Cardiac septum (tissue), 1 donor: ENCODE measurements at regions of chr9 and their contacts with region 1.

Region 1: DNA sequence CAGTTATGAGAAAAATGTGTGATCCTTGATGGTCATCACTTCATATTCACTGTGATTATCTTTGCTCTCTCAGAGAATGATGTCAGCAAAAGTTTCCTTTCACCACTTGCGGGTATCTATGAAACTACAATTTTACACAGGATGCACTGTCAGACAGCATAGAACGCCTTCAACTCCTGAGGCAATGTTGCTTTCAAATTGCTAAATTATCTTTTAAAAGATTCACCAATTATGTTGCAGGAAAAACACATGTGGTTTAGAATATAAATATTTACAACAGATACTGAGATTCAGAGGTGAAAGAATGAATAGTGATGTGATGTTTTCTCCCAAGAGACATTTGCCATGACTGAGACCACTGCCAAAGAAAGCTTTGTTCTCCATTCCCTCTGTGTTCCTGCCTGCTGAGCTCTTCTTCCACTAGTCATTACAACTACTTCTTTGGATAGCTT is 879.8 kb upstream of the DMAC1 start:
- DNase-seq: no peak

Region 2: GRCh38 chr9:8832955-8833354 is 153.6 kb after region 1 on chr9:
- intact Hi-C with region 1: loop called (anchors 10 kb)
- DNase-seq: no peak